Activated CD8-positive, alpha-beta T cell treated with anti-CD3 and anti-CD28 coated beads, Interleukin-2, amount 10 ng/mL, durations not matched to agents 7 days and 5 days (primary cell): ENCODE measurements at regions of chr4 and their contacts with region 1.

Region 1: DNA sequence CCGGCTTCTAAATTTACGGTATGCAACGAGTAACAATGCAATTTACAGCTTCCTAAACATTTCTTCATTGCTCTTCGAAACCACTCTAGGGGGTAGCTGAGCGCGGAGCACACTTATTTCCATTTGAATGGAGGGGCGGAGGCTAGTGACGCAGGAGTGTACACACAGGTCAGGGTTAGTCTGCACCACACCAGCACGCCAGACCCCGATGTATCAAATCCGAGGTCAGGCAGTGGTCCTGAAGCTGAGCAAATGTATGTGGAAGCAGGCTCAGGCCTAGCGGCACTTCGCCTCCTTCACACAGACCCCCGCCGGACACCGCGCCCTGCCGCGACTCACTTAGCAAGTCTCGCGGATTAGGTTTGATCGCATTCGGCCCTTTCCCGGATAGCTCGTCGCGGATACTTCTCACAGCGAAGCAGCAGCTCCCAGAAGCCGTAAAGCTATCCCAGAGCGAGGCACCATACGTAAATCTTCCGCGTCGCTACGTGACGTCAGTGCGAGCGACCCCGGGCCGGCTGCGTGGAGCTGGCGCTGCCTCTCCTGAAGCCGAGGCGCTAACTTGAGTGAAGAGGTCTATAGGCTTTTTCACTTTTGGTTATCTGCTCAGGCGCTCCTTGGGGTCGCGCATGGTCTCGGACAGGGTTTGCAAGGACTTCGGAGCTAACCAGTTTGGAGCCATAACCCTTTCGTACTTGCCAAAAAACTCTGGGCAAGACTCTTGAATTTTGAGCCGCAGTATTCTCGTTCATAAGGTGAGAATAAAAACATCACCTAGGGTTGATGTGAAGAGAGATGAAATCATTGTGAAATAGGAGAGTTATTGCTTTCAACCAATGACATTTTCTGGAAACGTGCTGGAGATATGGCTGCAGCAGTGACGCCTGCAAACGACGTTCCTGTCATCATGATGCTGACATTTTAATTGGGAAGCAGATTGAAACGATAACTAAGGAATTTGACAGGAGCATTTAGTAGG is at the start of gene AASDH:
- DNase-seq: peak; percentile 96
- ATAC-seq: peak; percentile 95
- H3K4me3 Mint-ChIP-seq: peak within 1 kb of the TSS; percentile 94
- H3K27ac Mint-ChIP-seq: peak within 1 kb of the TSS; percentile 97
- H3K4me1 Mint-ChIP-seq: peaks cover 36% of the 10 kb centered on the region
- H3K27me3 Mint-ChIP-seq: no peaks in the 10 kb centered on the region
- total RNA-seq, gene AASDH: 8.5 to 9.9 TPM

Region 2: GRCh38 chr4:56400560-56400959 is 13.2 kb after region 1 on chr4:
- CTCF ChIA-PET with region 1: interaction called, 8 read pairs
- POLR2A ChIA-PET with region 1: interaction called, 17 read pairs
- DNase-seq: no peak
- ATAC-seq: no peak
- H3K4me3 Mint-ChIP-seq: no peak overlapping the region
- H3K27ac Mint-ChIP-seq: no peak overlapping the region
- H3K4me1 Mint-ChIP-seq: no peaks in the 10 kb centered on the region
- H3K27me3 Mint-ChIP-seq: no peaks in the 10 kb centered on the region

Region 3: GRCh38 chr4:56424697-56425514 is 37.6 kb after region 1 on chr4:
- CTCF ChIA-PET with region 1: interaction called, 3 read pairs
- POLR2A ChIA-PET with region 1: interaction called, 12 read pairs
- DNase-seq: peak; percentile 55
- ATAC-seq: no peak
- H3K4me3 Mint-ChIP-seq: no peak overlapping the region
- H3K27ac Mint-ChIP-seq: no peak overlapping the region
- H3K4me1 Mint-ChIP-seq: peaks cover 20% of the 10 kb centered on the region
- H3K27me3 Mint-ChIP-seq: no peaks in the 10 kb centered on the region